Activated CD8-positive, alpha-beta T cell treated with anti-CD3 and anti-CD28 coated beads for 36 hours (primary cell): ENCODE measurements at regions of chrX and their contacts with region 1.

Region 1: DNA sequence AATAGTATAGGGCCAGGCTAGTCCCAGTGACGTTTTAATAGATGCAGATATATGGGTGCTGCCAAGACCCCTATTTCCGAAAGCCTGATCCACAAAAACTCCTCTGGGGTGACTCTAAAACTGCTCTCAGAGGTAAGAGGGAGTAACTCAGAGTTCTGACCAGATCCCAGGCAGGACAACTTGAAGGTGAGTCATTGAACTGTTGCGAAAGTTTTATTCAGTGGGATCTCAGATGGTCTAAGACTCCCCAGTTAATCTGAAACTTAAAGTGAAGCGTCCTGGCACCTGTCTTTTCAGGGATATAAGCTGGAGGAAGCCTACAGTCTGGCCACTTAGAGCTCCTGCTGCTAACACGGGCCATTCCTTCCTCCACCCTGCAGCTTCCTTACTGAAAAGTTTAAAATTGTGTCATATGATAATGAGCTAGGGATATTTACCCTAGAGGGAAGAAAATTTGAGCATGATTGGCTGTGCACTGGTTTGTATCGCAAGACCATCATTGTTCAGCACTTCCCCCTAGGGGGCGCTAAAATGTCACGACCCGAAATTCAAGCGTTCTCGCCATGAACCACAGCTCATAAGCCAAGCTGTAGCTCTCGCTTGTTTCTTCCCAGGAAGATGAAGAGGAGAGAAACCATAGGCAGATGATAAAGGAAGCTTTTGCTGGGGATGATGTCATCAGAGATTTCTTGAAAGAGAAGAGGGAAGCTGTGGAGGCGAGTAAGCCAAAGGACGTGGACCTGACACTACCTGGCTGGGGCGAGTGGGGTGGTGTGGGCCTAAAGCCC is 19.5 kb downstream of the UTP14A start:
- DNase-seq: peak; percentile 76
- ATAC-seq: peak; percentile 74
- H3K4me3 Mint-ChIP-seq: no peak overlapping the region
- H3K27ac Mint-ChIP-seq: no peak overlapping the region
- H3K4me1 Mint-ChIP-seq: peaks cover 3% of the 10 kb centered on the region
- H3K27me3 Mint-ChIP-seq: no peaks in the 10 kb centered on the region
- CTCF ChIP-seq: peak; percentile 61

Region 2: GRCh38 chrX:129637217-129638109 is 288.0 kb before region 1 on chrX:
- CTCF ChIA-PET with region 1: interaction called, 11 read pairs
- POLR2A ChIA-PET with region 1: interaction called, 3 read pairs
- intact Hi-C with region 1: no loop called
- DNase-seq: peak; percentile 78
- ATAC-seq: peak; percentile 87
- H3K4me3 Mint-ChIP-seq: no peak overlapping the region
- H3K27ac Mint-ChIP-seq: peak overlapping the region; percentile 42
- H3K4me1 Mint-ChIP-seq: peaks cover 2% of the 10 kb centered on the region
- H3K27me3 Mint-ChIP-seq: no peaks in the 10 kb centered on the region
- CTCF ChIP-seq: peak; percentile 76

Region 3: GRCh38 chrX:129905787-129906580 is 19.5 kb before region 1 on chrX and contains the start of gene UTP14A:
- CTCF ChIA-PET with region 1: interaction called, 11 read pairs
- POLR2A ChIA-PET with region 1: interaction called, 3 read pairs
- intact Hi-C with region 1: no loop called
- DNase-seq: peak; percentile 90
- ATAC-seq: peak; percentile 98
- H3K4me3 Mint-ChIP-seq: peak within 1 kb of the TSS; percentile 89
- H3K27ac Mint-ChIP-seq: peak within 1 kb of the TSS; percentile 92
- H3K4me1 Mint-ChIP-seq: peaks cover 25% of the 10 kb centered on the region
- H3K27me3 Mint-ChIP-seq: no peaks in the 10 kb centered on the region
- CTCF ChIP-seq: no peak
- total RNA-seq, gene UTP14A: 33.1 to 34.0 TPM

Region 4: DNA sequence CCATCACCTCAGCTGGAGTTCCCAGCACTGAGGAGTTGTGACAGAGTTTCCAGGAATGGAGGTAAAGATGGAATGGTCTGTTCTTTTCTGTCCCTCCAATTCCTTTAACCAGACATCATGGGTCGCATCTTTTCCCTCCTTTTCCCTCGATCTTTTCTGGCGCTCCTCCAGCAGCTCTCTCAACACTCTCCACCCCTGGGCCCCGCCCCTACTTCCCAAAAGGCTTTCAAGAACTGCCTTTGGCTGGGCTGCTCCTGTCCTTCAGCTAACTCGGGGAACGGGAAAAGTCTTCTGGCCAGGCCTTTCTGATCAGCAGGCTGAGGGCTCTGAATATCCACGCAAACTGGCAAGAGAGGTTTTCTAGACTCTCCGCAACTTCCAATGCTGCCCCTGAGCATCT is 14.5 kb after region 1 on chrX:
- CTCF ChIA-PET with region 1: interaction called, 11 read pairs
- POLR2A ChIA-PET with region 1: no interaction called
- intact Hi-C with region 1: no loop called
- DNase-seq: no peak
- ATAC-seq: no peak
- H3K4me3 Mint-ChIP-seq: no peak overlapping the region
- H3K27ac Mint-ChIP-seq: no peak overlapping the region
- H3K4me1 Mint-ChIP-seq: peaks cover 6% of the 10 kb centered on the region
- H3K27me3 Mint-ChIP-seq: no peaks in the 10 kb centered on the region
- CTCF ChIP-seq: no peak

Region 5: DNA sequence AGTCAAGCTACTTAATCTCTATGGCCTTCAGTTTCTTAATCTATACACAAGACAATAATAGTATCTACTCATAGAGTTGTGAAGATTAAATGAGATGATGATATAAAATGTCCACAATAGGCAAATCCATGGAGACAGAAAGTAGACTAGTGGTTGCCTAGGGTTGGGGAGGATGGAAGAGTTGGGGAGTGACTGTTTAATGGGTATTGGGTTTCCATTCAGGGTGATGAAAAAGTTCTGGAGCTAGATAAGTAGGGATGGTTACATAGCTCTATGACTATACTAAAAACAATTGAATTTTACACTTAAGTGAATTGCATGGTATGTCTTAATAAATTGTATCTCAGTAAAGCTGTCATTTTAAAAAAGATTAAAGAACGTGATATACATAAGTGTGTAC is 92.6 kb after region 1 on chrX:
- CTCF ChIA-PET with region 1: interaction called, 10 read pairs
- POLR2A ChIA-PET with region 1: no interaction called
- intact Hi-C with region 1: no loop called
- DNase-seq: no peak
- ATAC-seq: no peak
- H3K4me3 Mint-ChIP-seq: no peak overlapping the region
- H3K27ac Mint-ChIP-seq: no peak overlapping the region
- H3K4me1 Mint-ChIP-seq: no peaks in the 10 kb centered on the region
- H3K27me3 Mint-ChIP-seq: no peaks in the 10 kb centered on the region
- CTCF ChIP-seq: no peak

Region 6: DNA sequence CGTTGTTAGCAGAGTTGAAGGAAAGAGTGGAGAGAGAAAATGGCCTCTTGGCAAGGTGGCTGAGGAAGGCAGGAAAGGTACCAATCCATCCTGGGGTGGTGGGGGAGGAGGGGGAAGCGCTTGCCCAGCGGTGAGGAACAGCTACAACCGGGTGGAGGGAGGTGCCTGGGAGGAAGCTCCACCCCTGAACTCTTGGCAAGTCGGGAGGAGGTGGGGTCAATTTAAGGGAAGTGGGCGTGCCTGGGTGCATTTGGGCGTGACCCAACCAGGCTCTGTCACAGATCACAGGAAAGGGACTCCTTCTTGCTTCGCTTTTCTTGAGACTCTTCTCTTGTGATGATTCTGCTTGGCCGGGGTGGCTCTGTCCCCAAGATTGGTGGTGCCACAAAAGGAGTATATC is 98.6 kb after region 1 on chrX:
- CTCF ChIA-PET with region 1: interaction called, 81 read pairs
- POLR2A ChIA-PET with region 1: interaction called, 3 read pairs
- intact Hi-C with region 1: loop called (anchors 5 kb)
- DNase-seq: peak; percentile 89
- ATAC-seq: peak; percentile 100
- H3K4me3 Mint-ChIP-seq: no peak overlapping the region
- H3K27ac Mint-ChIP-seq: peak overlapping the region; percentile 52
- H3K4me1 Mint-ChIP-seq: peaks cover 10% of the 10 kb centered on the region
- H3K27me3 Mint-ChIP-seq: no peaks in the 10 kb centered on the region
- CTCF ChIP-seq: no peak

Region 7: GRCh38 chrX:130060122-130061069 is 134.9 kb after region 1 on chrX:
- CTCF ChIA-PET with region 1: interaction called, 48 read pairs
- POLR2A ChIA-PET with region 1: interaction called, 4 read pairs
- intact Hi-C with region 1: no loop called
- DNase-seq: peak; percentile 80
- ATAC-seq: peak; percentile 91
- H3K4me3 Mint-ChIP-seq: peak overlapping the region; percentile 72
- H3K27ac Mint-ChIP-seq: peak overlapping the region; percentile 77
- H3K4me1 Mint-ChIP-seq: peaks cover 5% of the 10 kb centered on the region
- H3K27me3 Mint-ChIP-seq: no peaks in the 10 kb centered on the region
- CTCF ChIP-seq: peak; percentile 66